ENCODE measurements at regions of chr1 and their contacts with region 1.

Region 1: DNA sequence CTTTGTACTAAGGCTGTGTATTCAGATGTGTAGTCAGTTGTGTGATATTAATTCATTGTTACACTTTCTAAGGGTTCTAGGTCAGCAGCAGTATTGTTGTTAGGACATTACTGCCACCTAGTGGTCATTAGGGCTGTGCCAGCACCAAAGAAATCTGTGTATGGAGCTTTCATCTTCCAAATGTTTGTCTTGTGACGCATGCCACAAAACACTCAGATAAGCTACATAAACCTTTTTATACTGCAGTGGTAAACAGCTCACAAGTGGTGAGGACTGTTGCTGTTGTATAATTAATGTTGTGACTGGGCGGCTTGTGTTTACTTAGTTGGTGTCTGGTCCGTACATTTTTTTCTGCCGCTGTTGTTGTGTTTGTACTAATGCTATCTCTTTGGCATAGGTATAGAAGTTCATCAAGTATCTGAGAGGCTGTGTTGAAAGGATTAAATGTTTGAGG is 51.7 kb downstream of the S1PR1 start:
- DNase-seq: peak; percentile 60
- H3K4me3 ChIP-seq: peak overlapping the region in 1 of 2 experiments; percentile 16; a peak in 1 of 4 replicates
- H3K27ac ChIP-seq: no peak overlapping the region
- H3K4me1 ChIP-seq: peaks cover 3 to 17% of the 10 kb centered on the region in 2 experiments; a peak in 3 of 4 replicates
- H3K27me3 ChIP-seq: no peaks in the 10 kb centered on the region
- CTCF ChIP-seq: peak; percentile 98
- EP300 ChIP-seq: no peak
- RAD21 ChIP-seq: peak; percentile 93

Region 2: GRCh38 chr1:100905181-100905580 is 383.3 kb before region 1 on chr1:
- CTCF ChIA-PET with region 1: interaction called, 13 read pairs
- POLR2A ChIA-PET with region 1: no interaction called
- DNase-seq: no peak
- H3K4me3 ChIP-seq: no peak overlapping the region
- H3K27ac ChIP-seq: no peak overlapping the region
- H3K4me1 ChIP-seq: no peaks in the 10 kb centered on the region; a peak in 1 of 4 replicates
- H3K27me3 ChIP-seq: no peaks in the 10 kb centered on the region
- CTCF ChIP-seq: no peak
- EP300 ChIP-seq: no peak
- RAD21 ChIP-seq: no peak

Region 3: GRCh38 chr1:100928128-100928527 is 360.4 kb before region 1 on chr1:
- CTCF ChIA-PET with region 1: interaction called, 67 read pairs
- POLR2A ChIA-PET with region 1: no interaction called
- DNase-seq: peak; percentile 1
- H3K4me3 ChIP-seq: no peak overlapping the region
- H3K27ac ChIP-seq: no peak overlapping the region
- H3K4me1 ChIP-seq: no peaks in the 10 kb centered on the region; a peak in 1 of 4 replicates
- H3K27me3 ChIP-seq: no peaks in the 10 kb centered on the region
- CTCF ChIP-seq: peak; percentile 10; the same call in 1 of the 2 replicates
- EP300 ChIP-seq: no peak
- RAD21 ChIP-seq: no peak

Region 4: DNA sequence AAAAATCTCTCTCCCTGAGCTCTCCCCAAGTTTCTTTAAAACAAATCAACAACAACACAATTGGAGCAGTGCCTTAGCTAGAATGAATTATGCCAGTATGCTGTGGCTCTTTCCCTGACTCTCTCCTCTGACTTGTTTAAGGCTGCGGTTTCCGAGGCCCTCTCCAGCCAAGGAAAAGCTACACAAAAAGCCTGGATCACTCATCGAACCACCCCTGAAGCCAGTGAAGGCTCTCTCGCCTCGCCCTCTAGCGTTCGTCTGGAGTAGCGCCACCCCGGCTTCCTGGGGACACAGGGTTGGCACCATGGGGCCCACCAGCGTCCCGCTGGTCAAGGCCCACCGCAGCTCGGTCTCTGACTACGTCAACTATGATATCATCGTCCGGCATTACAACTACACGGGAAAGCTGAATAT is 49.8 kb before region 1 on chr1:
- CTCF ChIA-PET with region 1: interaction called, 45 read pairs
- POLR2A ChIA-PET with region 1: no interaction called
- DNase-seq: peak; percentile 86
- H3K4me3 ChIP-seq: no peak overlapping the region; a peak in 1 of 4 replicates
- H3K27ac ChIP-seq: no peak overlapping the region
- H3K4me1 ChIP-seq: peaks cover 0 to 8% of the 10 kb centered on the region in 2 experiments; a peak in 2 of 4 replicates
- H3K27me3 ChIP-seq: no peaks in the 10 kb centered on the region
- CTCF ChIP-seq: peak; percentile 94
- EP300 ChIP-seq: no peak
- RAD21 ChIP-seq: peak; percentile 85

Region 5: GRCh38 chr1:101259744-101260148 is 28.8 kb before region 1 on chr1:
- CTCF ChIA-PET with region 1: interaction called, 12 read pairs
- POLR2A ChIA-PET with region 1: no interaction called
- DNase-seq: no peak
- H3K4me3 ChIP-seq: no peak overlapping the region
- H3K27ac ChIP-seq: peak overlapping the region in 1 of 2 experiments; percentile 63; a peak in 2 of 4 replicates
- H3K4me1 ChIP-seq: peaks cover 7 to 20% of the 10 kb centered on the region in 2 experiments; a peak in 3 of 4 replicates
- H3K27me3 ChIP-seq: no peaks in the 10 kb centered on the region
- CTCF ChIP-seq: no peak
- EP300 ChIP-seq: peak in 1 of 2 experiments; percentile 41; a peak in 1 of 4 replicates
- RAD21 ChIP-seq: no peak

Region 6: DNA sequence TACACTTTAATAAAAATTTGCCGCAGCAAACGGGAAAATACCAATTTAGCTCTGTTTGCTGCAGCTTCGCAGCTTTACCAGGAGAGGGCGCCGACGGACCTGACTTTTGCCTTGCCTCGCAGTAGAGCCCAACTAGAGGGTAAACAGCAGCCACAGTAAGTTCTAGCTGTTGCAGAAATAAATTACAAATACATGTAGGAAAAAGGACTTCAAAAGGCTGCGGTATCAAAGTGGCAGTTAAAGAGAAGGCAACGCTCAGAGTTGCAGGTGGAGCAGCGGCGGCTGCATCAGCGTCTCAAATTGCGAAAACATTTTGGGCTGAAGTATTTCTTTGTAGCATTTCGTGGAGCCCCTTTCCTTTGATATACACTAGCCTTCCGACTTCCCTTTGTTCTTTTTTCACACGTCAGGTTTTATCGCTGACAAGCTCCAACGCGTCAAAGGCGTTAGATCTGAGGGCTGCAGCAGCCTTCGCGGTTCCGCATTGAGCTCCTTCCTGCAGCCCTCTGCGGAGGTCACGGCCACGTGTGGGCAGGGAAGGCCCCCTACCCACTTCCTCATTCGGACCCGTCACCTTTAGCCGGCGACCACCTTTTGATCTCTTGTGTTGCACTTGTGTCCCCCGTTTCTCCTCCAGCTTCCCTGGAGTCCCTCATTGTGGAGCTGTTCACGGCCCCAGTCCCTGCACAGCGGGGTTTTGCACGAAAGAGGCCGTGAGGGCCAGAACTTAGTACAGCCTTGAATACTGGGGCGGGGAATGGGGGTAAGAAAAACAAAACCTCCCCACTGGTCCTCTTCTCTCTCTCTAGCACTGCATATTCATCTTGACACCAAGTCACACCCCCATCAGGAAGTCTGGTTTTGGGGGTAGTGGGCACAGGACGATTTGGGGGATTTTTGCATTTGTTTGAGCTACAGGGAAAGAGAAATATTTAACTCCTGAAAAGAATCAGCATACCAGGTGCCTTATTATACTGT is 21.1 kb after region 1 on chr1:
- CTCF ChIA-PET with region 1: interaction called, 13 read pairs
- POLR2A ChIA-PET with region 1: no interaction called
- DNase-seq: peak; percentile 66
- H3K4me3 ChIP-seq: no peak overlapping the region; a peak in 1 of 4 replicates
- H3K27ac ChIP-seq: no peak overlapping the region
- H3K4me1 ChIP-seq: no peaks in the 10 kb centered on the region; a peak in 1 of 4 replicates
- H3K27me3 ChIP-seq: no peaks in the 10 kb centered on the region
- CTCF ChIP-seq: peak; percentile 96
- EP300 ChIP-seq: no peak
- RAD21 ChIP-seq: peak; percentile 91

Measured in SK-N-SH (cell line).